ENCODE measurements at regions of chr1 and their contacts with region 1.

Region 1: DNA sequence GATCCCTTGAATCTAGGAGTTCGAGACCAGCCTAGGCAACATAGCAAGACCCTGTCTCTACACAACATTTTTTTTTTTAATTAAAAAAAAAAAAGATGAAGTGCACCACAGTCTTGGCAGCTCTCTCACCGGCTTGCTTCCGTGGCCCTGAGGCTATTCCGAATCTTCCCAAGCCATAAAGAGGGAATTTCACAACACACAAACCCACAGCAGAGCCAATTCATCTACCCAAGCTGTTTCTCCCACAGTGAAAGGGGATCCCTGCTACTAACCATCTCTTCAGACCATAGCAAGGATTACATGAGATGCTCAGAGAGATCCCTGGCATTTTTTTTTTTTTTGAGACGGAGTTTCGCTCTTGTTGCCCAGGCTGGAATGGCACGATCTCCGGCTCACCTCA is 8.3 kb upstream of the CHD5 start:
- DNase-seq: no peak
- CTCF ChIP-seq: no peak

Region 2: GRCh38 chr1:5915587-5916571 is 272.6 kb before region 1 on chr1:
- CTCF ChIA-PET with region 1: no interaction called
- POLR2A ChIA-PET with region 1: no interaction called
- DNase-seq: peak; percentile 74
- CTCF ChIP-seq: peak; percentile 60

Region 3: DNA sequence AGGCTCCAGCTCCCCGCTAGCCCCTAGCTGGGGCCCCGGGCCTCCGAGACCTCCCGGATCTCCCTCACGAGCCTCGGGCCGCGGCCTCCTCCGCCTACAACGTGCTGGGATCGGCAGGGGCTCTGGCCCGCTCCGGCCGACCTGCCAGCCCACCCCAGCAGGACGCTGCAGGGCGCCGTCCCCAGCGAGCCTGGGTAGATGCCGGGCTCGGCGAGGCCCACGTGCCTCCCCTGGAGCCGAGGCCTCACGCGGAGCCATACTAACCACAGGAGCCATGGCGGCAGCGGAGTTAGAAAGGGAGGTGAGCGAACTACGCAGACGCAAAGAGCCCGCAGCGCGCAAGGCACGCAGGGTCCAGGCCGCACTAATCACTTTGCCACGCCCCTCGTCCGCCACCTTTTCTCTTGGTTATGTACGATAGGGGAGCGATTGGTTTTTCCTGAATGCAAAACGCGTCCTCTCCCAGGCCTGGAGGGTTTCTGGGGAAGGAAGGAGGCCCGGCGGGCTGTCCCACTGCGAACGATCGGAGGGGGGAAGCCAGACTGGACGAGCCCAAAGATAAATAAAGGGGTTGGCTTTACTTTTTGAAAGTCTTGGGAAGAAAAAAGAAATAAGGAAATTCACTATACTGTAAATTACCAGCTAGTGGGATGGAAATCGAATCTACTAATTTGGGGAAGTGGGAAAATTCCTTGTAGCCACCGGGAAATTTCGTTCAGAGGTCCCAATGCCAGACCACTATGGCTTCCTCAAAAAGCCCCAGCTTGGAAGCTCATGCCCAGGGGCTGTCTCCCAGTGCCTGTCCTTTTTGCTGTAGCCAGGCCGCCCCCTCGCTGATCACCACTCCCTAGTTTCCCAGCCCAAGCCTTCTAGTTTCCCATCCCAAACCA is 11.1 kb after region 1 on chr1 and contains the start of gene RPL22:
- CTCF ChIA-PET with region 1: interaction called, 11 read pairs
- POLR2A ChIA-PET with region 1: no interaction called
- DNase-seq: peak; percentile 94
- CTCF ChIP-seq: no peak

Region 4: DNA sequence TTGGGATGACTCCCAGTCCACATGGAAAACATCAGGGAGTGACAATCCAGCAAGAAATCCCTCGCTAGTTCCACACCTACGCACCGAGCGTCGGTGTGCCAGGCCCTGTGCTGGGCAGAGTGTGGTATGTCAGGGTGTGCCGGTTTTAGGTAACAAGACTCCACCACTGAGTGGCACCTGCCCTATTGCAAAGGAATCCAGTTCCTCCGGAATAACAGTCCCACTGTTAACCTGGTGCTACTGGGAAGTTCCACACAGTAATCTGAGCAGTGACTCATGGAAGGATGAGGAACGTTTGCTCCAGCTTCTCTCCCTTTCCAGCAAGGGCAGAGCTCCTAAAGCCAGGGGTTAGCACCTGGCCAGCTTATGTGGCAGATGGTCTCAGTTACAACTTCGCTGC is 31.8 kb after region 1 on chr1:
- CTCF ChIA-PET with region 1: no interaction called
- POLR2A ChIA-PET with region 1: no interaction called
- DNase-seq: no peak
- CTCF ChIP-seq: no peak